Endothelial cell of umbilical vein (primary cell): ENCODE measurements at regions of chr22 and their contacts with region 1.

Region 1: GRCh38 chr22:32378707-32379272 is 21.1 kb downstream of the RFPL3 start:
- DNase-seq: peak; percentile 62
- H3K4me3 ChIP-seq: no peak overlapping the region
- H3K27ac ChIP-seq: no peak overlapping the region
- H3K4me1 ChIP-seq: no peaks in the 10 kb centered on the region
- H3K27me3 ChIP-seq: peaks cover 0 to 2% of the 10 kb centered on the region in 2 experiments
- CTCF ChIP-seq: peak; percentile 92 to 97
- POLR2A ChIP-seq: no peak

Region 2: DNA sequence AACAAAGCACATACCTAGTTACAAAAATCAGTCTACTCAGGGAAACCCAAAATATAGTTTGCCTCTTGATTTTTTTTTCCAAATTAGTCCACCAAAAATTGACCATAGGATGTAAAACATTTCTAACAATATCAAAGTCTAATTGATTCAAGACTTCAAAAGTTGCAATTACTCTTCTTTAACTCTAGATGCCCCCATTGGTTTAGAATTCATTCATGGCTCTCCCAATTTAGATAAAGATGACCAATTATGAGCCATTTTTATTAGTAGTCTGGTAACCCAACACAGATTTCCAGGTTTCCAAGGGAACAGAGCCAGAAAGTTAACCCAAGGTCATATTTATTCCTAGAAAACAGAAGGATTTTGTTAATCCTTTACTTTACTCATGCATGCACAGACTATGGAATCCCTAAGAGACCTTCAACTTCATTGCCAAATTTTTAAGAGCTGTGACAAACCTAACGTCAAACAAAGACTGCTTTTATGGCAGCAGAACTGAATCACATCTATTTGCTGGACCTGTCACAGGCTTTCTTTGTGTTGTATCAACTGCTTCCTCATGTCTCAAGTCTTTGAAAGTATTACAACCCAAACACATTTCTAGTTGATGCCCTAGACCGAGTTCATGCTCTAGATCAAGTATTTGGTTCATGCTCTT is 275.0 kb before region 1 on chr22:
- CTCF ChIA-PET with region 1: interaction called, 3 read pairs
- POLR2A ChIA-PET with region 1: no interaction called
- dilution Hi-C with region 1: no loop called
- intact Hi-C with region 1: loop called (anchors 5 kb)
- DNase-seq: no peak
- H3K4me3 ChIP-seq: no peak overlapping the region
- H3K27ac ChIP-seq: no peak overlapping the region
- H3K4me1 ChIP-seq: no peaks in the 10 kb centered on the region
- H3K27me3 ChIP-seq: peaks cover 2 to 5% of the 10 kb centered on the region in 2 experiments
- CTCF ChIP-seq: peak in 1 of 2 donors; percentile 5
- POLR2A ChIP-seq: no peak

Region 3: DNA sequence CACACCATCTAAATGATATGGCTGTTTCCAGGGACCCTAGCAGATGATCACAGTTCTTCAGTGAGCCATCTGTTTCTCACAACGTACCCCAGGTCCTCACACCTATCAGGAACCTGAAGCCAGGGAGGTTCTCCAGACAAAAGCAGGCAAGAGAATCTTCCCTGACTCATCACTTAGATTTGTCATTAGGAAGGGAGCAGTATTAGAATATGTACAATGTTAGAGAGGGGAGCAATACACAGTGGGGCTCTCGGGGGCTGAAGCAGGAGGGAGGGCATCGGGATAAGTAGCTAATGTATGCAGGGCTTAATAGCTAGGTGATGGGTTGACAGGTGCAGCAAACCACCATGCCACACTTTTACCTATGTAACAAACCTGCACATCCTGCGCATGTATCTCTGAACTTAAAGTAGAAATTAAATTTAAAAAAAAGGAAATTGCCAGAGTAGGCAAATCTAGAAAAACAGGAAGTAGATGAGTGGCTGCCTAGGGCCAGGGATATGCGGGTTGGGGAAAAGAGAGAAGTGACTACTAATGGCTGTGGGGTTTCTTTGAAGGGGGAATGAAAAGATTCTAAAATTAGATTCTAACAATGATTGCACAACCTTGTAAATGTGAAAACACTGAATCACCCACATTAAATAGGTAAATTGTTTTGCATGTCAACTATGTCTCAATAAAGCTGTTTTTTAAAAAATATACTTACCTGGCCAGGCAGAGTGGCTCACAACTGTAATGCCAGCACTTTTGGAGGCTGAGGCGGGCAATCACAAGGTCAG is 234.1 kb before region 1 on chr22:
- CTCF ChIA-PET with region 1: no interaction called
- POLR2A ChIA-PET with region 1: no interaction called
- dilution Hi-C with region 1: no loop called
- intact Hi-C with region 1: loop called (anchors 5 kb)
- DNase-seq: no peak
- H3K4me3 ChIP-seq: no peak overlapping the region
- H3K27ac ChIP-seq: no peak overlapping the region
- H3K4me1 ChIP-seq: no peaks in the 10 kb centered on the region
- H3K27me3 ChIP-seq: no peaks in the 10 kb centered on the region
- CTCF ChIP-seq: no peak
- POLR2A ChIP-seq: no peak

Region 4: GRCh38 chr22:32202539-32203180 is 176.1 kb before region 1 on chr22:
- CTCF ChIA-PET with region 1: interaction called, 7 read pairs
- POLR2A ChIA-PET with region 1: no interaction called
- dilution Hi-C with region 1: no loop called
- intact Hi-C with region 1: loop called (anchors 1 kb)
- DNase-seq: peak; percentile 45
- H3K4me3 ChIP-seq: no peak overlapping the region
- H3K27ac ChIP-seq: no peak overlapping the region
- H3K4me1 ChIP-seq: no peaks in the 10 kb centered on the region
- H3K27me3 ChIP-seq: peaks cover 4 to 19% of the 10 kb centered on the region in 2 experiments
- CTCF ChIP-seq: peak; percentile 51 to 76
- POLR2A ChIP-seq: no peak

Region 5: DNA sequence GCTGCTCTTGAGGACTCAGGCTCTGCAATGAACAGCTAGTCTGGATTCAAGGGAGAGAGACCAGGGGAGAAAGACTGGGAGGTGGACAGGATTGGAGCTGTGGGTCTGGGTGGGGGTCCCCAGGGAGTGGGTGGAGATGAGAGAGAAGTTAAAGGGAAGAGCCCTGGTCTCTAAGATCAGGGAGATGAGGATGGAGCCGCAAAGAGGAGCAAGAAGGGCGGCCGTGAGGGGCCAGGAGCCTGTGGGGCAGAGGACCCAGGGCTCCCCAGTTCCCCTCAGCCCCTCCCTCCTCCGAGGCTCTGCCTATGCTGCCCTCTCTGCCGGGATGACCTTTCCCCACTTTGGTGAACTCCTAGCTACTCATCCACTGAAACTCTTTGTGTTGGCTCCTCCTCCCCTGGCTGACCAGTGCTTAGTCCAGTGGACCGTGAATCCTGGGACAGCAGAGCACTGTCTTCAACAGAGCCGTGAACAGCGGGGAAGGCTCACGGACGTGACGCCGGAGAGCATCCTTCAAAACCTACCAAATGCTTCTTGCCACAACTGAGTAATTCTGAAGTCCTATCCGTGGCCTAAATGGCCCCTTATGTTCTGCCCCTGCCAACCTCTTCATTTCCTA is 37.6 kb before region 1 on chr22:
- CTCF ChIA-PET with region 1: no interaction called
- POLR2A ChIA-PET with region 1: no interaction called
- dilution Hi-C with region 1: no loop called
- intact Hi-C with region 1: no loop called
- DNase-seq: no peak
- H3K4me3 ChIP-seq: no peak overlapping the region
- H3K27ac ChIP-seq: no peak overlapping the region
- H3K4me1 ChIP-seq: peaks cover 26% of the 10 kb centered on the region
- H3K27me3 ChIP-seq: no peaks in the 10 kb centered on the region
- CTCF ChIP-seq: no peak
- POLR2A ChIP-seq: no peak

Region 6: DNA sequence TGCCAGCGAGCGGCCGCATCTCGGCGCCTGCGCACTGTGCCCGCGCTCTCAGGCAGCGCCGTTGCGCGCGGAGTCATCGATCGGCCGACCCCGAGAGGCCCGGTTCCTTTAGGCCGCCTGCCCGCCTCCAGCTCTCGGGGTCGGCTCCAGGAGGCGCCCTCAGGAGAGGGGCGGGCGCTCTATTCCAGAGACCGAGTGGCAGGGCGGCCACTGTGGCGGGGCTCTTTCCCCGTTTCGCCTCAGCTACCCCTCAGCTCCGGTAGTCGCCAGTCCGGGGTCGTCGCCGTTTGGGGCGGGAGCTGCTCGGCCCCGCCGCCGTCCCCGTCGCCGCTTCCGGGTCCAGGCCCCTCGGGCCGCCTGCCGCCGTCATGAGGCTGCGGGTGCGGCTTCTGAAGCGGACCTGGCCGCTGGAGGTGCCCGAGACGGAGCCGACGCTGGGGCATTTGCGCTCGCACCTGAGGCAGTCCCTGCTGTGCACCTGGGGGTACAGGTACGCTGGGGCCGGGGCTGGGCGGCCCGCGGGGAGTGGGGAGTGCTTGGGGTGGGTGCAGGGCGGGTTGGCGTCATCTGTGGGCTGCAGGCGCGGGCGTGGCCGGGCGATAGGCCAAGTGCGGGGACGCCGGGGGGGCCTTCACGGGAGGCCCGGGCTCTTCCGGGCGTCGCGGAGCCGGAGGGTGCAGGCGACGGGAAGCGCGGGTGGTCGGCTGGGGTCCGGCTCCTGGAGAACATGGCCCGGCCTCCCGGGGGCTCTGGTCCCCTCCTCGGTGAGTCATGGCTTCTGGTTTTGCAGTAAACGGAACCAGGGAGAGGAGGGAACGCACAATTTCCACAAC is 96.1 kb after region 1 on chr22 and contains the start of gene FBXO7:
- CTCF ChIA-PET with region 1: interaction called, 3 read pairs
- POLR2A ChIA-PET with region 1: no interaction called
- dilution Hi-C with region 1: no loop called
- intact Hi-C with region 1: loop called (anchors 1 kb)
- DNase-seq: peak; percentile 92
- H3K4me3 ChIP-seq: peak within 1 kb of the TSS; percentile 77 to 88 (median 81)
- H3K27ac ChIP-seq: peak within 1 kb of the TSS; percentile 90
- H3K4me1 ChIP-seq: peaks cover 20% of the 10 kb centered on the region
- H3K27me3 ChIP-seq: no peaks in the 10 kb centered on the region
- CTCF ChIP-seq: peak in 1 of 2 donors; percentile 66
- POLR2A ChIP-seq: peak; percentile 20
- total RNA-seq, gene FBXO7: 79.0 and 81.1 TPM in 2 replicates